WTC11 (cell line): ENCODE measurements at regions of chr3 and their contacts with region 1.

Region 1: DNA sequence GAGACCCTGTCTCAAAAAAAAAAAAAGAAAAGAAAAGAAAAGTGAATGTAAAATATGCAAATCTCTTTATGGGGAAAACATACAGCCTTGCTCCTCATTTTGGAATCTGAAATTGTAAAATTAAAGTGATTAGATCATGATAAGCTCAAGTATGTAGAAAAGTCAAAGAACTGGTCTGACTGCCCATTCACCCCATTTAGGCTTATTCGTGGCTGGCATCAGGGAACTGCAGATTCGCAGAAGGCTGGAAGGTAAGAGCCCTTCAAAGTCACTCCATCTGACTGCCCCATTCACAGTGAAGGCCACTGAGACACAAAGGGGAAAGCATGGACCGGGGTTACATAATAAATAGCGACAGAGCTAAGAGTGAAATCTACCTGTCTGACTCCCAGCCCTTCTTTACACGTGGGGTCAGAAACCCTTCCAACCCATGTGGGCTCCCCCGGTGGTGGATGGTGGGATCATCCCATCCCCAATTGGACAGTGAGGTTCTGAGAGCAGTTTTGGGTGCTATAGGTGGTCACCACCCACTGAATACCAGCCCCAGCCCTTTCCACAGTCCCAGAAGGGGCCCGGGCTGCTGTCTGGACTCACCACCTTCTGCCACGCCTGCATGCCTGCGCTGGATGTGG is 18.1 kb downstream of the DZIP1L start:
- DNase-seq: peak; percentile 68
- ATAC-seq: peak; percentile 96
- H3K4me3 Mint-ChIP-seq: no peak overlapping the region
- H3K27ac Mint-ChIP-seq: no peak overlapping the region
- H3K4me1 Mint-ChIP-seq: peaks cover 15% of the 10 kb centered on the region
- H3K27me3 Mint-ChIP-seq: peaks cover 2% of the 10 kb centered on the region; the same call in 1 of the 2 replicates
- CTCF ChIP-seq: peak; percentile 30; the same call in 1 of the 2 replicates

Region 2: GRCh38 chr3:137770835-137771399 is 326.4 kb before region 1 on chr3:
- CTCF ChIA-PET with region 1: no interaction called
- POLR2A ChIA-PET with region 1: no interaction called
- DNase-seq: peak; percentile 57
- ATAC-seq: peak; percentile 12
- H3K4me3 Mint-ChIP-seq: peak overlapping the region; percentile 82
- H3K27ac Mint-ChIP-seq: no peak overlapping the region
- H3K4me1 Mint-ChIP-seq: peaks cover 68% of the 10 kb centered on the region
- H3K27me3 Mint-ChIP-seq: peaks cover 100% of the 10 kb centered on the region
- CTCF ChIP-seq: no peak

Region 3: DNA sequence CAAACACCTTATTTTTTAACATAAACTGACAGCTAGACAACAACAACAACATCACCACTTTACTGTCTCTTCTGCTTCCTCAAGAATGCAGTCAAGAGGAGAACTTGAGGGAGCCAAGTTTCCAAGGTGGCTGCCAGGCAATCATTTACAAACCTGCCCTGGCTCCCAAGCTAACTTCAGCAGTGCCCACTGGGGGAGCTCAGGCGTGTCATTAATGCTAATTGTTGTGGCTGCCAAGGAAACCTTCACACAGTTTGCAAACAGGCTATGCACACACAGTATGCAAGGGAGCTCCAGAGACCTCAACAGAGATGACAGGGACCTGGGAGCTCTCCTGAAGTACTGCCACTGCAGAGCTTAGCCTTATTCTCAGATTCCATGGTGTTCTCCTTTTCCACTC is 16.0 kb after region 1 on chr3:
- CTCF ChIA-PET with region 1: interaction called, 61 read pairs
- POLR2A ChIA-PET with region 1: no interaction called
- DNase-seq: no peak
- ATAC-seq: peak; percentile 7; the same call in 1 of the 2 replicates
- H3K4me3 Mint-ChIP-seq: peak overlapping the region; percentile 10; the same call in 1 of the 2 replicates
- H3K27ac Mint-ChIP-seq: no peak overlapping the region
- H3K4me1 Mint-ChIP-seq: peaks cover 31% of the 10 kb centered on the region
- H3K27me3 Mint-ChIP-seq: peaks cover 6% of the 10 kb centered on the region
- CTCF ChIP-seq: no peak